Posterior vena cava (tissue), 2 donors: ENCODE measurements at regions of chr2 and their contacts with region 1.

Region 1: DNA sequence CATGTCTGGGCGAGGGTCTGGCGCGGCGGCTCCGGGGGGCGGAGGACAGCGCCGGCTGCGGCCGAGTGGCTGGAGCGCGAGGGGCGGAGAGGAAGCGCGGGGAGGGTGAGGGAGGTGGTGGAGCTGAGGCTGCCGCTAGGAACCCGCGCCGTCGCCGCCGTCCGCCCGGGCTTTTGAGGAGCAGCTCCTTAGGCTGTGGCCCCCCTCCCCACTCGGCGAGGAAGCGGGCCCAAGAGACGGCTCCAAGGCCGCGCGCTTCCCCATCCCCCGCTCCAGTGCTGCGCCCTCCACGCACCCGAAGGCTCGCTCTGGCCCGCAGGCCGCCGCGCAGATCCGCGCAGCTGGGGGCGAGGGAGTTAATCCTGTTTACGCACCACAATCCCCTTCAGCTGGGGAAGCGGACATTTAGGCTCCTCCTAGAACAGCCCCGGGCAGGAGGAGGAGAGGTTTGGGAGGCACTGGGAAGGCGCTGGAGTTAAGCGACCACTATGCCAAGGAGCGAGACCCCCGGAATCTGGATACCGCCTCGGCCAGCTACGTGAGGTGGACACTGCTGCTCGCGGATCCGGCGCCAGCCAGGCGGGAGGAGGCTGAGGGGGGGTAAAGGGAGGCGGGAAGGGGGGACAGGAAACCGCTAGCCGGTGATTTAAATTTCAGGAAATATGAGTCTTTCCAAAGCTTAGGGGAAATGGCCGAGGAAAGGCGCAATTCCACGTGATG is at the start of gene CNRIP1:
- DNase-seq: peak; percentile 92
- total RNA-seq, gene CNRIP1: 27.6 to 32.2 TPM

Region 2: DNA sequence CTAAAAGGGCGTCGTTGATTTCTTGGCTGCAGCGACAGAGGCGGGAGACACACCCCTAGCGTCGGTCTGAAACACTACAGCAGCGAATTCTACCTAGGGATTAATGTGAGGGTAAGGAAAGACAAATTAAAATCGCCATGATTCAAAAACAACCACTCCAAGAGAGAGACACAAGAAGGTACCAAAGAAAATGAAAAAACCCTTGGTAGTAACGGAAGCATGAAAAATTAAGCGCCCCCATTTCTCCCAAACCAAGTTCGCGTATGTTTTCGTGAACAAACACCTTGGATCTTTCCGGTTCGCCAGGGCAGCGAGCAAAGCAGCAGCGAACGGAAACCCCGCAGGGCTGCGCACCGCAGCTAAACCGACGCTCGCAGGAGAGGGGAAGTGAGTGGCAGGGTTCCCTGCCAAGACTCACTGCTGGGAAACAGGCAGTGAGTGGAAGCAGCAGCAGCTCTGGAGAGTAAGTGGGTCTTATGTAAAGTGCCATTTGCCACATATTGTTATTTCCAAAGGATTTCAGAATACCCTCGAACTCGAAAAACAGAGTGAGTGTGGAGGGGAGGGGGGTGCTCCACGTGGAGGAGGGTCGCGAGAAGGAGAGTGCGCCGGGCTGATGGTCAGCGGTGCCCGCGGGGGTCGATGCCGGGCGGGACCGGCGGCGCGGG is 68.2 kb before region 1 on chr2:
- intact Hi-C with region 1: loop called in 1 of 2 experiments (anchors 10 kb)
- DNase-seq: peak; percentile 82